IMR-90 (cell line): ENCODE measurements at regions of chr15 and their contacts with region 1.

Region 1: GRCh38 chr15:81265944-81266775 is 57.8 kb downstream of the STARD5 start:
- DNase-seq: peak; percentile 80
- ATAC-seq: peak; percentile 91
- H3K4me3 ChIP-seq: no peak overlapping the region
- H3K27ac ChIP-seq: no peak overlapping the region
- H3K4me1 ChIP-seq: peaks cover 7% of the 10 kb centered on the region
- H3K27me3 ChIP-seq: no peaks in the 10 kb centered on the region
- CTCF ChIP-seq: peak; percentile 97
- POLR2A ChIP-seq: no peak
- RAD21 ChIP-seq: peak; percentile 97

Region 2: DNA sequence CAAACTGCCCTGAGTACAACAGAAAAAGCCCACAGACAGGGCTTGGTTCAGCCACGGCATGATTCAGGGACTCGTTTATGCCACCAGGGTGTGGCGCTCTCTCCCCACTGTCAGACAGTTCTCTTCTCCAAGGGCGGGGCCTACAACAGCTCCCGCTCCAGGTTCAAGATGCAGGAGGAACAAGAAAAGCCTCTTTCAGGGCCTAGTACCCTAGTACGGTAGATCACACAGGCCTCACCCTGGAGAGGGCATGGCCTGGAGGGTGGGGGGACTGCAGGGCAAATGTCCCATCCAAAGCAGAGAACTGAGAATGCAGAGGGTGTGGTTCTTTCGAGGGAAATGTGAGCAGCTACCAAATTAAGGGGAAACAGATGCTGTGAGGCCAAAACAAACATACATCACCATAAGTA is 288.5 kb before region 1 on chr15:
- CTCF ChIA-PET with region 1: interaction called, 5 read pairs
- POLR2A ChIA-PET with region 1: no interaction called
- dilution Hi-C with region 1: no loop called
- in situ Hi-C with region 1: no loop called
- intact Hi-C with region 1: loop called (anchors 1 kb)
- DNase-seq: no peak
- ATAC-seq: peak; percentile 55
- H3K4me3 ChIP-seq: no peak overlapping the region
- H3K27ac ChIP-seq: no peak overlapping the region
- H3K4me1 ChIP-seq: peaks cover 5% of the 10 kb centered on the region
- H3K27me3 ChIP-seq: no peaks in the 10 kb centered on the region
- CTCF ChIP-seq: peak; percentile 42
- POLR2A ChIP-seq: no peak
- RAD21 ChIP-seq: peak; percentile 51

Region 3: GRCh38 chr15:81098861-81099651 is 167.1 kb before region 1 on chr15:
- CTCF ChIA-PET with region 1: interaction called, 21 read pairs
- POLR2A ChIA-PET with region 1: no interaction called
- dilution Hi-C with region 1: no loop called
- in situ Hi-C with region 1: no loop called
- intact Hi-C with region 1: no loop called
- DNase-seq: peak; percentile 36
- ATAC-seq: peak; percentile 21; the same call in 1 of the 2 replicates
- H3K4me3 ChIP-seq: no peak overlapping the region
- H3K27ac ChIP-seq: no peak overlapping the region
- H3K4me1 ChIP-seq: no peaks in the 10 kb centered on the region
- H3K27me3 ChIP-seq: no peaks in the 10 kb centered on the region
- CTCF ChIP-seq: no peak
- POLR2A ChIP-seq: no peak
- RAD21 ChIP-seq: no peak

Region 4: DNA sequence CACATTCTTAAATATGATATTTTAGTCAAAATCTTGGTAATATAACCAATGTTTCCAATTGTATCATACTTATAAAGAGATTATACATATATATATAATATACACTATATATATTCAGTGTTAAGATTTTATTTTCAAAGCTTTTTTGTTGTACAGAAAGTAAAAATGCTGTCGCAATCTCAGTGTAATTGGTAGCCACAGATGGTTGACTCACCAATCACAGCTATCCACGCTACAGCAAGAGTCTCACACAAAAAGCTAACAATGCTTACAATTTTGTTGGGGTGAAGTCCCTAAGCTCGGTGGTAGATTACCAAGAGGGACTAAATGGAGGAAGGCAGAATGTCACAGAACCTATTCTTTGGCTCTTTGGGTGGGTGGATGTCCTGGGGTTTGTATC is 149.0 kb before region 1 on chr15:
- CTCF ChIA-PET with region 1: interaction called, 34 read pairs
- POLR2A ChIA-PET with region 1: interaction called, 3 read pairs
- dilution Hi-C with region 1: no loop called
- in situ Hi-C with region 1: no loop called
- intact Hi-C with region 1: no loop called
- DNase-seq: peak; percentile 66
- ATAC-seq: peak; percentile 8; the same call in 1 of the 2 replicates
- H3K4me3 ChIP-seq: no peak overlapping the region
- H3K27ac ChIP-seq: peak overlapping the region; percentile 17; the same call in 1 of the 2 replicates
- H3K4me1 ChIP-seq: peaks cover 12% of the 10 kb centered on the region
- H3K27me3 ChIP-seq: no peaks in the 10 kb centered on the region
- CTCF ChIP-seq: no peak
- POLR2A ChIP-seq: no peak
- RAD21 ChIP-seq: no peak

Region 5: DNA sequence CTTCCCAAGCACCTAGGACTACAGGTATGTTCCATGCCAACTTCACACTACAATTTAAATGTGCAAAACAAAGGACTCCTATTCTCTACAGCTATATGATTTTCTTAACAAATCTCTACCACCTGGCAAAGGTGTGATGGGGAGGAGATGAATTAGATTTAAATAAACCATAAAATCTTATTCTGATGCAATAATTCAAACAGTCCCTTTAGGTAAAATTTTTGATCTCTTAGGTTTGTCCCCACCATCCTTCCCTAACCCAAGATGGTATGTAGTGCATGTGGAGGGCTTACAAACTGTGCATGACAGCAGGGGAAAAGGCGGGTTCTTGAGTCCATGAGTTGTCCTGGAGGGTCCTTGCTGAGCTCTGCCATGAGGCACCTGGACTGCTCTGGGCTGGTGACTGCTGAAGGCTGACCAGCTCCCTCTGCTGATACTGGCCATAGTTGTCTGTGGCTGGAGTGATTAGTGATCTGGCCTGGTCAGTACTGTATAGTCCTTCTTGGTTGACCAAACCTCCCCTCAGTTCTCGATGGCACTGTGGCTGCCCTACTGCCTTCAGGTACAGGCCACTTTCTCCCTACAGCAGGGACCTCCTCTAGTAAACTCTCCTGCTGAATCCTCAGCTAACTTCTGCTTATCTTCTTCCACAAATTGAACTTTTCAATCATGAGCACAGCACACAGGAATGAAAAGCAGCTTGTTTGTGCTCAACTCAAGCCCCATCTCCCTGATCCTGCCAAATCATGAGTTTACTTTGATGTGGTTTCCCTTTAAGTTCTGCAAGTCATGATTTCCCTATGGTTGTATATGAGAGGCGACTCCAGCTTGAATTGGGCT is 102.0 kb before region 1 on chr15:
- CTCF ChIA-PET with region 1: interaction called, 23 read pairs
- POLR2A ChIA-PET with region 1: no interaction called
- dilution Hi-C with region 1: no loop called
- in situ Hi-C with region 1: loop called (anchors 5 kb)
- intact Hi-C with region 1: no loop called
- DNase-seq: peak; percentile 95
- ATAC-seq: peak; percentile 71
- H3K4me3 ChIP-seq: no peak overlapping the region
- H3K27ac ChIP-seq: peak overlapping the region; percentile 98
- H3K4me1 ChIP-seq: peaks cover 27% of the 10 kb centered on the region
- H3K27me3 ChIP-seq: no peaks in the 10 kb centered on the region
- CTCF ChIP-seq: peak; percentile 29; the same call in 1 of the 2 replicates
- POLR2A ChIP-seq: no peak
- RAD21 ChIP-seq: no peak; the same call in 1 of the 2 replicates

Region 6: DNA sequence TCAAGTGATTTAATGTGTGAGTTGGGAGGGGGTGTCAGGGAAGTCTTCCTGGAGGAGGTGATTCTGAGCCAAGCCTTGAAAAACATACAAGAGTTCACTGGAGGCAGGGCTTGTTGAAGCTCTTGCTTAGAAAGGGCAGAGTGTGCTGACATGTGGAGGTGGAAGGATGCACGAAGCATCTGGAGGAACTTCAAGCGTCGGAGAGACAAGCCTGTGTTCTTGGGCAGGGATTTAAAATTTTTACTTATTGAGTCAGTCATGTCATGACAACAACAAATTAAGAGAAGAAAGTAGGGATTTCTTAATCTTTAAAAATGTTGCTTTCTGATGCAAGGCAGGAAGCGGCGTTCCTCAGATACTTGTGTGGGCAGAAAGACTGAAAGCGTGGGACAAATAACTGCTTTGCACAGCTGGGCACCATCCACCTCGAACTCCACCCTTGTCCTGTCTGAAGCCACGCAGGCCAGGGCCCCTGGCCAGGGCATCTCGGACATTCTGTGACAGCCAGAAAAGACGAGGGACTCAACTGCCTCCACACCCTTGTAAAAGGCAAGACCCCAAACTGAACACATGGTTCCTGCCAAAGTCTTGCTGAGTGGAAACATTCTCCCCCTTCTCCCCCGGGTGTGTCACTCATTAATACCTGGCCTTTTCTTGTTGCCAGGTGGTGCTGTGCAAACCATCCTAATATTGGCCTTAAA is 76.4 kb before region 1 on chr15:
- CTCF ChIA-PET with region 1: interaction called, 14 read pairs
- POLR2A ChIA-PET with region 1: no interaction called
- dilution Hi-C with region 1: no loop called
- in situ Hi-C with region 1: no loop called
- intact Hi-C with region 1: no loop called
- DNase-seq: peak; percentile 99
- ATAC-seq: peak; percentile 87
- H3K4me3 ChIP-seq: no peak overlapping the region
- H3K27ac ChIP-seq: peak overlapping the region; percentile 96
- H3K4me1 ChIP-seq: peaks cover 25% of the 10 kb centered on the region
- H3K27me3 ChIP-seq: no peaks in the 10 kb centered on the region
- CTCF ChIP-seq: no peak
- POLR2A ChIP-seq: no peak; the same call in 1 of the 2 replicates
- RAD21 ChIP-seq: 0 out of 2 replicates have a peak, but pooled peaks have one; percentile 4

Region 7: DNA sequence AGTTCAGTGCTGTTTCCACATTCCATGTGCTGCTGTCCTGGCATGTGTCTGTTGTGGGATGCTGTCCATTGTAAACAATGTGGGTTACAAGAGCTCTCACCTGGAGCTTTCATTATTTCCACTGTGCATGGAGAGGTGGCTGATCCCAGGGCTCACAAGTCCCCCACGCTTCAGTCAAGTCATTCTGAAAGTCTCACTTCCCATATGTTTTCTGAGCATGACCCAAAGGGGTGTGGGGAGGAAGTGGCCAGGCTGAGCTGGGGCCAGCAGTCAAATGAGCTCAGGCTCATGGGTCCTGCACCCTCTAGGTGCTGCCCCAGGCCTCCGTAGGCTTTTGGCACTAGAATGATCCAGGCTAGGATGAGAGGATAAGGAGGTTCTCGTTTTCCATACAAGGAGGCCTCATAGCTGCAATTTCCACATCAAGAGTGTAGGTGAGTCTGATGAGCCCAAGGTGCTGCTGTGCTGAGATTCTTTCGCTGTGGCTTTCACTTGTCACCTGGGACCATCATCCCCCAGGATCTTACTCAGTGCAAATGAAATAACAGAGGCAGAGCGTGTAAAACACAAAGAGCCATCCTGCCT is 35.7 kb after region 1 on chr15:
- CTCF ChIA-PET with region 1: no interaction called
- POLR2A ChIA-PET with region 1: no interaction called
- dilution Hi-C with region 1: no loop called
- in situ Hi-C with region 1: no loop called
- intact Hi-C with region 1: no loop called
- DNase-seq: no peak
- ATAC-seq: no peak
- H3K4me3 ChIP-seq: no peak overlapping the region
- H3K27ac ChIP-seq: no peak overlapping the region
- H3K4me1 ChIP-seq: peaks cover 2% of the 10 kb centered on the region
- H3K27me3 ChIP-seq: no peaks in the 10 kb centered on the region
- CTCF ChIP-seq: no peak
- POLR2A ChIP-seq: no peak
- RAD21 ChIP-seq: no peak